ENCODE measurements at regions of chr22 and their contacts with region 1.

Region 1: DNA sequence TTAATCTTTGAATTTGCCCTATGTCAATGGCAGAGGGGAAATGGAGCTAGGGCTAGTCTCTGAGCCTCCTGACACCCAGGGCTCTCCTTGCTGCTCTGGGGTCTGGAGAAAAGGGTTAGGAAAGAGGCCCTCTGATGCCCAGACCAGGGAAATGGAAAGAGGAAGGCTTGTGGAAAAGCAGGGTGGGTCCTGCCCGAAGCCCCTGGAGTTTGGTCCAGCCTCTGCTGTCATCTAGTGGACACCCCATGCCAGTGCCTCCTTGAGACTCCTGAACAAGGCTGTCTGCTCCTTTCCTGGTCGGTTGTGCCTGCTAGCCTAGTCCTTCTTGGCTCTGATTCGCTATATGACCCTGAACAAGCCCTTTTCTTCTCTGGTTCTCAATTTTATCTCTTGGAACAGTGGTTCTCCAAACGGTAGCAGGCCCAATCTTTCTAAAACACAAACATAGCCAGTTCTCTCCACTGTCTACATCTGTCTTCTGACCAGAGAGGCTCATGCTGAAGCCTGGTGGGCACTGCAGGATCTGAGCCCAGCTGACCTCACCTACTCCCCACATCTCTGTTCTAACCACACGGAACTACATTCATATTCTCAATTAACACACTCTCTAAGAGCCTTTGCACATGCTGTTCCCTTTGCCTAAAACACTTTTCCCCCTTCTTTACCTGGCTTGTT is 8.8 kb upstream of the PLA2G3 start:
- DNase-seq: peak in 6 of 9 donors; percentile 4 to 30 (median 20)
- ATAC-seq: peak; percentile 61
- H3K4me3 ChIP-seq: no peak overlapping the region
- H3K4me3 Mint-ChIP-seq: no peak overlapping the region
- H3K27ac ChIP-seq: no peak overlapping the region
- H3K27ac Mint-ChIP-seq: no peak overlapping the region
- H3K4me1 ChIP-seq: no peaks in the 10 kb centered on the region
- H3K4me1 Mint-ChIP-seq: peaks cover 0 to 7% (median 0%) of the 10 kb centered on the region in 7 donors
- H3K27me3 ChIP-seq: no peaks in the 10 kb centered on the region
- H3K27me3 Mint-ChIP-seq: peaks cover 0 to 13% (median 4%) of the 10 kb centered on the region in 5 donors

Region 2: DNA sequence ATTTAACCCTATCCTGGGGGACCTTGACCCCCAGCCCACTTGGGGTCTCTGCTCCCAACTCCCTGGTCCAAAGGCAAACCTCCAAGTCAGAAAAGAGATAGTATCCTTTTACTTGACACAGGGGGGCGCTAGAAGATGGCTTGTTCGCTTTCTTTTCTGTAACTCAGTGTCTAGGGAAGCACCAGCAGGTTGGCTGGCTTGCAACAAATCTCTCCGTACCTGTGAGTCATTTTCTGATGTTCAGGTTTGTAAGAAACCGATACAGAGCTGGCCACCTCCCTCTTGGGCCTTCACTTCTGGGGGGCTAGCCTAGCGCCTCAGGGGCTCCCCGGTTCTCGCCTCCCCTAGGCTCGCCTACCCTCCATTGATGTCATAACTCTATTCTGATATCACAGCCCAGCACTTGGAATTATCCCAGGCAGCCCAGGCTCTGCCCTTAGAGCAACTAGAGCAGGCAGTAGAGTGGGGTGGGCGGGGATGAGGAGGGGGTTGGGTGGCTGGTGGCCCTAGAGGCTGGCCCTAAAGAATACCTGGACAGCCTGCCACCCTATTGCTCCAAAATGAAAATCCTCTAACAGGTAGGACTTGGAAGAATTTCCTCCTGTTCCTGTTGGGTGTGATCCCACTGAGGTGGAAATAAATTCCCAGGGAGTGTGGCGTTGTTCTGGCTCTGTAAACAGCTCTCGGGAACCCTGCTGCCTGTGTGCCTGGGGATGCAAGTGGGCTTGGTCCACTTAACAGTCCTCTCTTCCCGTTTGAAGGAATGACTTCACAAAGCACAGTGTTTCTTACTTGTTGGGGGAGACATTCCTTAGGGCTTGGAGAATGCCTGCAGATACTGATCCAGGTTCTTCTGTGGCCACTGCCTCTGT is 385.0 kb before region 1 on chr22:
- CTCF ChIA-PET with region 1: no interaction called
- POLR2A ChIA-PET with region 1: no interaction called
- intact Hi-C with region 1: loop called in 1 of 2 experiments (anchors 5 kb)
- DNase-seq: peak in 8 of 9 donors; percentile 41 to 74 (median 66)
- ATAC-seq: peak; percentile 72
- H3K4me3 ChIP-seq: no peak overlapping the region
- H3K4me3 Mint-ChIP-seq: no peak overlapping the region
- H3K27ac ChIP-seq: no peak overlapping the region
- H3K27ac Mint-ChIP-seq: no peak overlapping the region
- H3K4me1 ChIP-seq: no peaks in the 10 kb centered on the region
- H3K4me1 Mint-ChIP-seq: peaks cover 0 to 3% (median 0%) of the 10 kb centered on the region in 7 donors
- H3K27me3 ChIP-seq: no peaks in the 10 kb centered on the region
- H3K27me3 Mint-ChIP-seq: no peaks in the 10 kb centered on the region

Region 3: GRCh38 chr22:30947816-30948454 is 201.2 kb before region 1 on chr22:
- CTCF ChIA-PET with region 1: no interaction called
- POLR2A ChIA-PET with region 1: no interaction called
- intact Hi-C with region 1: loop called in 1 of 2 experiments (anchors 1 kb)
- DNase-seq: peak in 7 of 9 donors; percentile 29 to 67 (median 52)
- ATAC-seq: peak; percentile 72
- H3K4me3 ChIP-seq: no peak overlapping the region
- H3K4me3 Mint-ChIP-seq: no peak overlapping the region
- H3K27ac ChIP-seq: peak overlapping the region; percentile 4
- H3K27ac Mint-ChIP-seq: no peak overlapping the region
- H3K4me1 ChIP-seq: peaks cover 11 to 63% of the 10 kb centered on the region in 2 donors
- H3K4me1 Mint-ChIP-seq: peaks cover 52 to 72% (median 65%) of the 10 kb centered on the region in 7 donors
- H3K27me3 ChIP-seq: no peaks in the 10 kb centered on the region
- H3K27me3 Mint-ChIP-seq: no peaks in the 10 kb centered on the region

Region 4: GRCh38 chr22:31089160-31090100 is 59.7 kb before region 1 on chr22:
- CTCF ChIA-PET with region 1: interaction called, 4 read pairs
- POLR2A ChIA-PET with region 1: no interaction called
- intact Hi-C with region 1: loop called (anchors 1 kb)
- DNase-seq: peak in 3 of 9 donors; percentile 25 to 31 (median 27)
- ATAC-seq: no peak
- H3K4me3 ChIP-seq: no peak overlapping the region
- H3K4me3 Mint-ChIP-seq: no peak overlapping the region
- H3K27ac ChIP-seq: no peak overlapping the region
- H3K27ac Mint-ChIP-seq: no peak overlapping the region
- H3K4me1 ChIP-seq: no peaks in the 10 kb centered on the region
- H3K4me1 Mint-ChIP-seq: peaks cover 0 to 5% (median 4%) of the 10 kb centered on the region in 7 donors
- H3K27me3 ChIP-seq: no peaks in the 10 kb centered on the region
- H3K27me3 Mint-ChIP-seq: no peaks in the 10 kb centered on the region

Measured in naive thymus-derived CD4-positive, alpha-beta T cell (primary cell).